RWPE1 (cell line): ENCODE measurements at regions of chr16 and their contacts with region 1.

Region 1: GRCh38 chr16:19907161-19907992 is 22.7 kb upstream of the GPRC5B start:
- DNase-seq: peak; percentile 73
- H3K27ac ChIP-seq: no peak overlapping the region
- CTCF ChIP-seq: peak; percentile 93

Region 2: GRCh38 chr16:20300312-20301097 is 393.1 kb after region 1 on chr16:
- CTCF ChIA-PET with region 1: interaction called, 32 read pairs
- POLR2A ChIA-PET with region 1: no interaction called
- DNase-seq: peak; percentile 58
- H3K27ac ChIP-seq: no peak overlapping the region
- CTCF ChIP-seq: peak; percentile 64

Region 3: DNA sequence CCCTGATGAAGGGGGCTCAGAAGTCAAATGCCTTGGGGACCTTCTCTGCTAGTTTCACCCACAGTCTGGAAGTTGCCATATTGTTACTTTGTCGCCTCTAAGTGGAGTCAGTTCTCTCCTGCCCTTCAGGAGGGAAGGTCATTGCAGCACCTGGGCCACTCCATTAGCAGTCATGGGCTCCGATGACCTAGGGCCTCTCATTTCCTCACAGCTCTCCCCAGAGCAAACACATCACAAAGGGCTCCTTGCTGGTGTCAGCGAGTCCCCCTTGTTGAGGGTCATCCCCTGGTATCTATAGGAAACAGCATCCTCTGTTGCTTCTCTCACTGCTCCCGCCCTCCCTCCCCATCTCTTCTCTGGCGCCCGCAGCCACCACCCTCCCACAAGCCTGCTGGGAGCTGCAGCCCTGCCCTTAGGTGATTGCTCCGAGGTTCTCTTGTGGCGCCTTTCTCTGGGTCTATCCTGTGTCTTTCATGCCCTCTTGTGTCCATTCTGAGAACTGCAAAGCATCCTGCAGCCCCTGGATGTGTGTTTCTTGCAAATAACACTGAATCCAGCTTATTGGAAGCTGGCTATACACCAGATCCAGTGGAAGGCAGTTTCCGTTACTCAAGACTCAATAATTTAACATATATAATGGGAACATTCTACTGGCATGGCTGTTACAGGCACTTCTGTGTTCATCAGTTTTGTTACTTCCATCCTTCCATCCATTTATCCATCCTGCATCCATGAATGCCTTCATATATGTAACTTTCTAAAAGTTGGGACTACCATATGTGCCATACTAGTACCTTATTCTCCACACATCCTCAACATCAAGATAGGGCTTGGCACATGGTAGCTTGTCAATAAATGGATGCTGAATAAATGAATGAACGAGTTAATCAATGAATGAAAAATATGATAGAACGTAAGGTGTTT is 476.0 kb after region 1 on chr16:
- CTCF ChIA-PET with region 1: interaction called, 71 read pairs
- POLR2A ChIA-PET with region 1: no interaction called
- DNase-seq: peak; percentile 63
- H3K27ac ChIP-seq: no peak overlapping the region
- CTCF ChIP-seq: peak; percentile 82